ENCODE measurements at regions of chr2 and their contacts with region 1.

Region 1: GRCh38 chr2:77487074-77487803 is 34.9 kb downstream of the LRRTM4 start:
- DNase-seq: no peak
- H3K4me3 ChIP-seq: no peak overlapping the region
- H3K4me3 Mint-ChIP-seq: no peak overlapping the region
- H3K27ac Mint-ChIP-seq: no peak overlapping the region
- H3K4me1 ChIP-seq: no peaks in the 10 kb centered on the region
- H3K4me1 Mint-ChIP-seq: no peaks in the 10 kb centered on the region
- H3K27me3 ChIP-seq: no peaks in the 10 kb centered on the region
- H3K27me3 Mint-ChIP-seq: peaks cover 5% of the 10 kb centered on the region
- CTCF ChIP-seq: no peak

Region 2: DNA sequence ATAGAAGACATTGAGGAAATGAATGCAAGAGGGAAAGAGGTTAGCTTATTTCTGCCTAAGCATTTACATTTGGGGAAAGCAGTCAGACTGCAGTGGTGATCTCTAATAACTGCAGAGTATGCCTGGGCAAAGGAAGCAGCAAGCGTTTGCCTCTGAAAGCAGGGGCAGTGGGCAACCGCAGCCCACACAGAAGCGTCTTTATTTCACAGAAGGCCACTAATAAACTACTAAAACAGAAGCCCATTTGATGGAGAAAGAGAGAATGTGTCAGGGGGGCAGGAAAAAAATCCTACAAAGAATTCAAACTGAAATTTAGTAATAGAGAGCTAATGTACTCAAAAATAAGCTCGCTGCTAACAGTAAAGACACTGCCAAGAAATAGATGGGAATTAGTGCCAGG is 18.1 kb before region 1 on chr2:
- CTCF ChIA-PET with region 1: no interaction called
- POLR2A ChIA-PET with region 1: no interaction called
- intact Hi-C with region 1: no loop called
- DNase-seq: no peak
- H3K4me3 ChIP-seq: no peak overlapping the region
- H3K4me3 Mint-ChIP-seq: no peak overlapping the region
- H3K27ac Mint-ChIP-seq: no peak overlapping the region
- H3K4me1 ChIP-seq: no peaks in the 10 kb centered on the region
- H3K4me1 Mint-ChIP-seq: no peaks in the 10 kb centered on the region
- H3K27me3 ChIP-seq: no peaks in the 10 kb centered on the region
- H3K27me3 Mint-ChIP-seq: peaks cover 4% of the 10 kb centered on the region
- CTCF ChIP-seq: no peak

Region 3: GRCh38 chr2:77512507-77512906 is 25.3 kb after region 1 on chr2:
- CTCF ChIA-PET with region 1: no interaction called
- POLR2A ChIA-PET with region 1: no interaction called
- intact Hi-C with region 1: loop called (anchors 2 kb)
- DNase-seq: no peak
- H3K4me3 ChIP-seq: no peak overlapping the region
- H3K4me3 Mint-ChIP-seq: no peak overlapping the region
- H3K27ac Mint-ChIP-seq: no peak overlapping the region
- H3K4me1 ChIP-seq: no peaks in the 10 kb centered on the region
- H3K4me1 Mint-ChIP-seq: no peaks in the 10 kb centered on the region
- H3K27me3 ChIP-seq: no peaks in the 10 kb centered on the region
- H3K27me3 Mint-ChIP-seq: peaks cover 2% of the 10 kb centered on the region
- CTCF ChIP-seq: no peak

Measured in Caco-2 (cell line).